Activated CD4-positive, alpha-beta memory T cell treated with anti-CD3 and anti-CD28 coated beads for 36 hours (primary cell): ENCODE measurements at regions of chr12 and their contacts with region 1.

Region 1: DNA sequence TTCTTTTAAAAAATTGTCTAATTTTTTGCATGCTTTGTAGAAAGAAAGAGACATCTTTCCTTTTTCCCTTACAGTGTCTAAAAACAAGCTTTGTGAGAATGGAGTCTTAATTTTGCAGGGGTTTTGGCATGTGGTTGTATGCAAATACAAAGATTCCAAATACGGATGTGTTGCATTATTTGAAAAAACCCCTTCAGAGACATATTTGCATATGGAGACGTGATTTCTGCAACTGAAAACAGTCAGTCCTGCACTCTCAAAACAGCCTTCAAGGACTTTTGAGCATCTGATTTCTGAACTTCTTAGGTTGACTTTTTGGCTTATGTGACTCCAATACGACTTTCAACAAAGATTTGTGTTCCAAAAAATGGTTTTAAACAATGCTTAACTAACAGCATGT is 7.8 kb downstream of the IRAK3 start:
- DNase-seq: no peak
- H3K4me3 Mint-ChIP-seq: no peak overlapping the region
- H3K27ac Mint-ChIP-seq: no peak overlapping the region
- H3K4me1 Mint-ChIP-seq: peaks cover 12% of the 10 kb centered on the region
- H3K27me3 Mint-ChIP-seq: peaks cover 21% of the 10 kb centered on the region

Region 2: GRCh38 chr12:66130277-66131066 is 66.3 kb before region 1 on chr12 and contains the start of gene LLPH:
- CTCF ChIA-PET with region 1: no interaction called
- POLR2A ChIA-PET with region 1: no interaction called
- intact Hi-C with region 1: loop called (anchors 2 kb)
- DNase-seq: peak; percentile 94
- H3K4me3 Mint-ChIP-seq: peak within 1 kb of the TSS; percentile 96
- H3K27ac Mint-ChIP-seq: peak within 1 kb of the TSS; percentile 94
- H3K4me1 Mint-ChIP-seq: peaks cover 50% of the 10 kb centered on the region
- H3K27me3 Mint-ChIP-seq: no peaks in the 10 kb centered on the region
- total RNA-seq, gene LLPH: 29.1 to 31.2 TPM